A549 (cell line): ENCODE measurements at regions of chr10 and their contacts with region 1.

Region 1: GRCh38 chr10:62244780-62245467 is 23.7 kb downstream of the RTKN2 start:
- DNase-seq: peak in 1 of 2 experiments; percentile 67
- ATAC-seq: peak; percentile 74 to 87
- H3K4me3 ChIP-seq: no peak overlapping the region
- H3K27ac ChIP-seq: peak overlapping the region; percentile 71 to 74; a peak in 5 of 6 replicates
- H3K4me1 ChIP-seq: peaks cover 41% of the 10 kb centered on the region
- CTCF ChIP-seq: peak; percentile 91
- EP300 ChIP-seq: no peak
- POLR2A ChIP-seq: no peak
- RAD21 ChIP-seq: peak; percentile 94 to 97

Region 2: GRCh38 chr10:62050893-62051433 is 194.0 kb before region 1 on chr10:
- CTCF ChIA-PET with region 1: interaction called, 21 read pairs
- POLR2A ChIA-PET with region 1: interaction called, 3 read pairs
- DNase-seq: peak; percentile 66 to 81
- ATAC-seq: peak; percentile 75 to 78
- H3K4me3 ChIP-seq: peak overlapping the region; percentile 37; the same call in 2 of the 3 replicates
- H3K27ac ChIP-seq: peak overlapping the region; percentile 63 to 74
- H3K4me1 ChIP-seq: peaks cover 55% of the 10 kb centered on the region
- CTCF ChIP-seq: no peak
- EP300 ChIP-seq: peak; percentile 72 to 76; a peak in 2 of 5 replicates
- POLR2A ChIP-seq: no peak
- RAD21 ChIP-seq: no peak; a peak in 1 of 5 replicates

Region 3: DNA sequence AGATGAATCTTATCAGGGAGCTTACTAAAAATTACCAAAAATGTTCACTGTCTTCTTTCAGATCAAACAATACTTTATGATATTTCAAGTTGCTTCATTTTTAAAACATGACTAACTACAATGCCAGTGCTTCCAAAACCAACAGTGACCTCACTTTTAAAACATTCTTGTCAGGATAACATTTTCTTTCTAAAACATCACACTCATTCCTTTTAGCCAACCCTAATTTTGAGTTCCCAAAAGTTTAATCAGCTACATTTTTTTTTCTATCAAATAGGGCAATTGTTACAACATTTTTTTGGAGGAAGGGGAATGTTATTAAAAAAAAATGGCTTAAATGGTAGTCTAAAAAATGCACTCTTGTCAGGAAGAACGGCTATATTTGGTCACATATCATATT is 13.6 kb before region 1 on chr10:
- CTCF ChIA-PET with region 1: interaction called, 14 read pairs
- POLR2A ChIA-PET with region 1: no interaction called
- DNase-seq: peak in 1 of 2 experiments; percentile 36
- ATAC-seq: peak; percentile 56 to 71; a peak in 4 of 6 replicates
- H3K4me3 ChIP-seq: no peak overlapping the region
- H3K27ac ChIP-seq: peak overlapping the region; percentile 61 to 85
- H3K4me1 ChIP-seq: peaks cover 48% of the 10 kb centered on the region
- CTCF ChIP-seq: no peak
- EP300 ChIP-seq: peak in 1 of 2 experiments; percentile 43; a peak in 1 of 5 replicates
- POLR2A ChIP-seq: no peak
- RAD21 ChIP-seq: 0 out of 5 replicates have a peak, but pooled peaks of 1 of the 2 experiments have one; percentile 14

Region 4: GRCh38 chr10:62264702-62265436 is 19.9 kb after region 1 on chr10:
- CTCF ChIA-PET with region 1: interaction called, 10 read pairs
- POLR2A ChIA-PET with region 1: no interaction called
- DNase-seq: peak; percentile 50 to 85
- ATAC-seq: peak; percentile 75 to 82
- H3K4me3 ChIP-seq: no peak overlapping the region
- H3K27ac ChIP-seq: no peak overlapping the region
- H3K4me1 ChIP-seq: peaks cover 7% of the 10 kb centered on the region; the same call in 1 of the 3 replicates
- CTCF ChIP-seq: peak; percentile 57
- EP300 ChIP-seq: no peak
- POLR2A ChIP-seq: no peak
- RAD21 ChIP-seq: peak; percentile 63 to 66

Region 5: GRCh38 chr10:62779487-62780248 is 534.7 kb after region 1 on chr10:
- CTCF ChIA-PET with region 1: no interaction called
- POLR2A ChIA-PET with region 1: no interaction called
- DNase-seq: no peak
- ATAC-seq: no peak
- H3K4me3 ChIP-seq: no peak overlapping the region
- H3K27ac ChIP-seq: no peak overlapping the region
- H3K4me1 ChIP-seq: no peaks in the 10 kb centered on the region
- CTCF ChIP-seq: no peak
- EP300 ChIP-seq: no peak
- POLR2A ChIP-seq: no peak
- RAD21 ChIP-seq: no peak